PC-9 (cell line): ENCODE measurements at regions of chr5 and their contacts with region 1.

Region 1: GRCh38 chr5:139457654-139458306 is 4.8 kb downstream of the ECSCR start:
- DNase-seq: no peak
- H3K4me3 ChIP-seq: no peak overlapping the region
- H3K27ac ChIP-seq: no peak overlapping the region
- H3K4me1 ChIP-seq: 0 out of 2 replicates have a peak, but pooled peaks cover 7% of the 10 kb centered on the region
- H3K27me3 ChIP-seq: no peaks in the 10 kb centered on the region
- CTCF ChIP-seq: no peak

Region 2: GRCh38 chr5:139417214-139417613 is 40.6 kb before region 1 on chr5:
- CTCF ChIA-PET with region 1: no interaction called
- POLR2A ChIA-PET with region 1: interaction called, 29 read pairs
- intact Hi-C with region 1: no loop called
- DNase-seq: no peak
- H3K4me3 ChIP-seq: no peak overlapping the region
- H3K27ac ChIP-seq: no peak overlapping the region
- H3K4me1 ChIP-seq: no peaks in the 10 kb centered on the region
- H3K27me3 ChIP-seq: no peaks in the 10 kb centered on the region
- CTCF ChIP-seq: no peak

Region 3: GRCh38 chr5:139492700-139493192 is 35.0 kb after region 1 on chr5:
- CTCF ChIA-PET with region 1: interaction called, 13 read pairs
- POLR2A ChIA-PET with region 1: no interaction called
- intact Hi-C with region 1: no loop called
- DNase-seq: peak in 1 of 2 experiments; percentile 51
- H3K4me3 ChIP-seq: no peak overlapping the region
- H3K27ac ChIP-seq: no peak overlapping the region
- H3K4me1 ChIP-seq: peaks cover 37% of the 10 kb centered on the region
- H3K27me3 ChIP-seq: no peaks in the 10 kb centered on the region
- CTCF ChIP-seq: no peak